ENCODE measurements at regions of chr4 and their contacts with region 1.

Region 1: DNA sequence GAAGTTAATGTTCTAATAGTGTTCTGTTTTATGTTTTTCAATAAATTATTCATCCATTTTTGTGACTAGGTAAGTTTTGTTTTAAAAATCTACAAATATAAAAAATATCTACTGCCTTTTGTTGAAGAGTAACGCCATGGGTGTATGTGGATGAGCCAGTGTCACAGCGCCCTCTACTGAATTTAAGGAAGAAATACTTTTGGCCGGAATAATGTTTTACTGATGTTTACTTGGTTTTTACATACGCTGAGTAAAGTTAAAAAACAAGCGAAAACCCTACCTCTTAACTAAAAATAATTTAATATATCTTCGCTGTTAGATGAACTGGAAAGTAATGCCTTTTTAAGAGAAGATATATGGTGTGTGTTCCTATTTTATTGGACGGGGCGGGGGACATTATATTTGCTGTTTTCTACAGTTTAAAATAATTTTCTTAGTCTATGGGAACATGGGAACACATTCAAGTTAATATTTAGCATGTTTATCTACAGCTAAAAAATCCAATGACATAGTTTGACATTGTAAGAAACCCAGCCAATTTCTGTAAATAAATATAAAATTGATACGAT is 86.1 kb downstream of the CPE start:
- DNase-seq: no peak
- H3K4me3 ChIP-seq: no peak overlapping the region
- H3K27ac ChIP-seq: no peak overlapping the region
- H3K4me1 ChIP-seq: no peaks in the 10 kb centered on the region
- H3K27me3 ChIP-seq: no peaks in the 10 kb centered on the region
- CTCF ChIP-seq: peak in 2 of 3 experiments; percentile 59 to 63; a peak in 3 of 4 replicates
- EP300 ChIP-seq: no peak
- POLR2A ChIP-seq: no peak
- RAD21 ChIP-seq: peak; percentile 89 to 90

Region 2: DNA sequence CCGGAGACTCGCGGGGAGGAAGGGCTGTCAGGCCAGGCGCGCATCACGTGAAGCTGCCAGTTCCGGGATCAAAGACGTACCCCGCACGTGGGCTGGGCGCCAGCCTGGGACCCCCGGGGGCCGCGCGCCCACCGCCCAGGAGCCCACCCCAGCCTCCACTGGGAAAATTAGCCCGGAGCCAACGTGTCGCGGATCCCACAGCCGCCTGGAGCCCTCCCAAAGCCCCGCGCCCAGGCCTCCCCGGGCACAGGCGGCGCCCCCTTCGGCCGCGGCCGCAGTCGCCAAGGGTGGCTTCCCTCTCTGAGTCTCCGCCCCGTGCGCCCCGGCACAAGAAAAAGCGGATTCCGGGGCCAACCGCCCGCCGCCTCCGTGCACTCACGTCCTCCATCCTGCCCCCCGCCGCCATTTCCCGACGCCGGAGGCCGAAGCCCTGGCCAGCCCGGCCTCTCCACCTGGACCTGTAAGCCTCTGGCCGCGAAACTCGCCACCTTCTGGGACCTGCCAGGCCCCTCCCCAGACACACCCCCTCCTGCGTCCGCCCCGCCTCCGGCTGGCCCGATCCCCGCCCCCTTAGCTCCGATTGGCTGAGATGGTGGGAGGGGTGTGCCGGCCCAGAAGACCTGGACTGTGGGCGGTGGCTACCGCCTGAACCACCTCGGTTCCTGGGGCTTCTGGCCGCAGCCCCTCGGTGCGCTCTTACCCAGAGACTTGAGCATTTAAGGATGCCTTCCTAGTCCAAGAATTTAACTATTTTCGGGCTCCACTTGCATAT is 352.3 kb before region 1 on chr4 and contains the start of gene TMEM192:
- CTCF ChIA-PET with region 1: interaction called, 11 read pairs
- POLR2A ChIA-PET with region 1: no interaction called
- DNase-seq: peak; percentile 73 to 97
- H3K4me3 ChIP-seq: peak within 1 kb of the TSS; percentile 66 to 86 (median 74)
- H3K27ac ChIP-seq: peak within 1 kb of the TSS; percentile 13; the same call in 1 of the 2 replicates
- H3K4me1 ChIP-seq: peaks cover 0 to 3% (median 0%) of the 10 kb centered on the region in 4 experiments; a peak in 1 of 7 replicates
- H3K27me3 ChIP-seq: peaks cover 0 to 1% (median 0%) of the 10 kb centered on the region in 4 experiments; a peak in 1 of 7 replicates
- CTCF ChIP-seq: peak; percentile 11 to 39 (median 25); a peak in 3 of 4 replicates
- EP300 ChIP-seq: no peak
- POLR2A ChIP-seq: peak; percentile 72 to 85
- RAD21 ChIP-seq: no peak
- total RNA-seq, gene TMEM192: 10.2 and 10.9 TPM in 2 replicates

Region 3: GRCh38 chr4:165355900-165356300 is 109.0 kb before region 1 on chr4:
- CTCF ChIA-PET with region 1: interaction called, 24 read pairs
- POLR2A ChIA-PET with region 1: no interaction called
- DNase-seq: no peak
- H3K4me3 ChIP-seq: no peak overlapping the region
- H3K27ac ChIP-seq: no peak overlapping the region
- H3K4me1 ChIP-seq: no peaks in the 10 kb centered on the region
- H3K27me3 ChIP-seq: no peaks in the 10 kb centered on the region
- CTCF ChIP-seq: peak; percentile 61 to 83 (median 69)
- EP300 ChIP-seq: no peak
- POLR2A ChIP-seq: no peak
- RAD21 ChIP-seq: peak; percentile 72 to 80

Region 4: DNA sequence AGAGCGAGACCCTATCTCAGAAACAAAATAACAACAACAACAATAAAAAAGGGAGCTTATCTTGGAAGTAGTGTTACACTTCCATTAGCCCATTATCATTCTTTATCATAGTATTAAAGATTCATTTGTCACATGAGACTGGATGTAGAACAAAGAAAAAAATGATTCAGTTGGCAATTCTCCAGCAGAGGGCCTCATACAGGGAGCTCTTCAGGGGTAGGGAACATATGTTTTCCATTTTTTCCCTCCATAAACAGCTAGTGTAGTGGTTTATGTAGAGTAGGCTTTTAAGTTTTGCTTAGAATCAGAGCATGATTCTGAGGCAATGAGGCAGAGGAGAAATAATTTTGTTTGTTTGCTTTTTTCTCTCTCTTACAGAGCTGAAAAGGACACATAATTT is 80.3 kb before region 1 on chr4:
- CTCF ChIA-PET with region 1: interaction called, 15 read pairs
- POLR2A ChIA-PET with region 1: no interaction called
- DNase-seq: no peak
- H3K4me3 ChIP-seq: no peak overlapping the region
- H3K27ac ChIP-seq: no peak overlapping the region
- H3K4me1 ChIP-seq: peaks cover 0 to 4% (median 3%) of the 10 kb centered on the region in 4 experiments; a peak in 3 of 7 replicates
- H3K27me3 ChIP-seq: peaks cover 0 to 7% (median 4%) of the 10 kb centered on the region in 4 experiments; a peak in 2 of 7 replicates
- CTCF ChIP-seq: peak in 1 of 3 experiments; percentile 38; a peak in 2 of 4 replicates
- EP300 ChIP-seq: no peak
- POLR2A ChIP-seq: no peak
- RAD21 ChIP-seq: 0 out of 4 replicates have a peak, but pooled peaks of 1 of the 2 experiments have one; percentile 6

Region 5: GRCh38 chr4:165440415-165441189 is 24.3 kb before region 1 on chr4:
- CTCF ChIA-PET with region 1: interaction called, 10 read pairs
- POLR2A ChIA-PET with region 1: no interaction called
- DNase-seq: no peak
- H3K4me3 ChIP-seq: no peak overlapping the region
- H3K27ac ChIP-seq: no peak overlapping the region
- H3K4me1 ChIP-seq: peaks cover 0 to 2% (median 0%) of the 10 kb centered on the region in 4 experiments; a peak in 1 of 7 replicates
- H3K27me3 ChIP-seq: no peaks in the 10 kb centered on the region
- CTCF ChIP-seq: no peak
- EP300 ChIP-seq: no peak
- POLR2A ChIP-seq: no peak
- RAD21 ChIP-seq: no peak

Region 6: GRCh38 chr4:165592386-165592785 is 127.5 kb after region 1 on chr4:
- CTCF ChIA-PET with region 1: no interaction called
- POLR2A ChIA-PET with region 1: no interaction called
- DNase-seq: no peak
- H3K4me3 ChIP-seq: no peak overlapping the region
- H3K27ac ChIP-seq: no peak overlapping the region
- H3K4me1 ChIP-seq: no peaks in the 10 kb centered on the region
- H3K27me3 ChIP-seq: no peaks in the 10 kb centered on the region
- CTCF ChIP-seq: no peak
- EP300 ChIP-seq: no peak
- POLR2A ChIP-seq: no peak
- RAD21 ChIP-seq: no peak